Naive thymus-derived CD4-positive, alpha-beta T cell (primary cell): ENCODE measurements at regions of chr1 and their contacts with region 1.

Region 1: GRCh38 chr1:27603681-27604578 is at the start of gene AHDC1:
- DNase-seq: peak; percentile 85 to 93 (median 90)
- ATAC-seq: peak; percentile 89
- H3K4me3 ChIP-seq: peak within 1 kb of the TSS; percentile 81
- H3K4me3 Mint-ChIP-seq: peak within 1 kb of the TSS; percentile 83 to 98 (median 91)
- H3K27ac ChIP-seq: peak within 1 kb of the TSS; percentile 84
- H3K27ac Mint-ChIP-seq: peak within 1 kb of the TSS; percentile 66 to 98 (median 90)
- H3K4me1 ChIP-seq: peaks cover 11 to 37% of the 10 kb centered on the region in 2 donors
- H3K4me1 Mint-ChIP-seq: peaks cover 40 to 49% (median 42%) of the 10 kb centered on the region in 7 donors
- H3K27me3 ChIP-seq: no peaks in the 10 kb centered on the region
- H3K27me3 Mint-ChIP-seq: no peaks in the 10 kb centered on the region
- total RNA-seq, gene AHDC1: 18.4 to 38.8 (median 21.3) TPM

Region 2: DNA sequence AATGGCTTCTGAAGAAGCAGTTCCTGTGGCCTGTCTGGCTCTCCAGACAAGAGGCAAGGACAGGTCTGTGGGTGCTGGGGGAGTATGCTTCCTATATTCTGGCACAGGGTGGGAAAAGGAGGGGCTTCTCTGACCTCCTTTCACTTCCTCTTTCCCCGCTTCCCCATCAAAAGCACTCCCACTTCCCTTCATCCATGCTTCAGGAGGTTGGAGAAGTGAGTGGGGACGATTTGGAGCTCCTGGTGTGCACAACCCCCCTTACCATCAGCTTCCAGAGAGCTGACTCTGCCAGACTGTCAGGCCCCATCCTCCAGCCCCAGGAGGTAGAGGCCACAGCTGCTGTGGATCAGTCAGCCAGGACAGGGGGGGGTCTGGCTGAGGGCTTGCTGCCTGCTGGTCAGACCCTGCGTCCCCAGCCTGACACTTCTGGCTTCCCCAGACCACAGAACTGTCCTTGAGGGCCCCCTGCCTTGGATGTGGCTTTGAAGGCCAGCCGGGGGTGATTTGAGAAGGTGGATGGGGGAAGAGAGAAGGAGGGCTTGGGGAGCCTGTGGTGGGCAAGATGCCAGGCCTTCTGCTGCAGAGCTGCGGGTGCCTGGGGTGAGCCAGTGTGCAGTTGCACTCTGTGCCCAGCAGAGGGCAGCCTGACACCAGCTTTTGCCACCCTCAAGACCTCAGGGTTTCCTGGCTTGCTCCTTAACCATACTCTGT is 303.4 kb before region 1 on chr1:
- CTCF ChIA-PET with region 1: interaction called, 87 read pairs
- POLR2A ChIA-PET with region 1: interaction called, 3 read pairs
- intact Hi-C with region 1: loop called (anchors 1 to 2 kb)
- DNase-seq: peak; percentile 66 to 84 (median 76)
- ATAC-seq: peak; percentile 95
- H3K4me3 ChIP-seq: no peak overlapping the region
- H3K4me3 Mint-ChIP-seq: no peak overlapping the region
- H3K27ac ChIP-seq: no peak overlapping the region
- H3K27ac Mint-ChIP-seq: no peak overlapping the region
- H3K4me1 ChIP-seq: no peaks in the 10 kb centered on the region
- H3K4me1 Mint-ChIP-seq: peaks cover 0 to 9% (median 3%) of the 10 kb centered on the region in 7 donors
- H3K27me3 ChIP-seq: no peaks in the 10 kb centered on the region
- H3K27me3 Mint-ChIP-seq: no peaks in the 10 kb centered on the region

Region 3: GRCh38 chr1:27392096-27392777 is 211.7 kb before region 1 on chr1 and contains the start of gene GPR3:
- CTCF ChIA-PET with region 1: interaction called, 24 read pairs
- POLR2A ChIA-PET with region 1: interaction called, 5 read pairs
- intact Hi-C with region 1: loop called (anchors 1 kb)
- DNase-seq: peak; percentile 82 to 95 (median 88)
- ATAC-seq: peak; percentile 97
- H3K4me3 ChIP-seq: peak within 1 kb of the TSS; percentile 57
- H3K4me3 Mint-ChIP-seq: peak within 1 kb of the TSS; percentile 76 to 90 (median 83)
- H3K27ac ChIP-seq: peak within 1 kb of the TSS; percentile 64
- H3K27ac Mint-ChIP-seq: peak within 1 kb of the TSS; percentile 54 to 98 (median 84)
- H3K4me1 ChIP-seq: peaks cover 9 to 18% of the 10 kb centered on the region in 2 donors
- H3K4me1 Mint-ChIP-seq: peaks cover 12 to 27% (median 20%) of the 10 kb centered on the region in 7 donors
- H3K27me3 ChIP-seq: no peaks in the 10 kb centered on the region
- H3K27me3 Mint-ChIP-seq: peaks cover 0 to 16% (median 0%) of the 10 kb centered on the region in 5 donors
- total RNA-seq, gene GPR3: 0.24 to 0.93 (median 0.45) TPM in 3 of 5 experiments, not detected in the others

Region 4: DNA sequence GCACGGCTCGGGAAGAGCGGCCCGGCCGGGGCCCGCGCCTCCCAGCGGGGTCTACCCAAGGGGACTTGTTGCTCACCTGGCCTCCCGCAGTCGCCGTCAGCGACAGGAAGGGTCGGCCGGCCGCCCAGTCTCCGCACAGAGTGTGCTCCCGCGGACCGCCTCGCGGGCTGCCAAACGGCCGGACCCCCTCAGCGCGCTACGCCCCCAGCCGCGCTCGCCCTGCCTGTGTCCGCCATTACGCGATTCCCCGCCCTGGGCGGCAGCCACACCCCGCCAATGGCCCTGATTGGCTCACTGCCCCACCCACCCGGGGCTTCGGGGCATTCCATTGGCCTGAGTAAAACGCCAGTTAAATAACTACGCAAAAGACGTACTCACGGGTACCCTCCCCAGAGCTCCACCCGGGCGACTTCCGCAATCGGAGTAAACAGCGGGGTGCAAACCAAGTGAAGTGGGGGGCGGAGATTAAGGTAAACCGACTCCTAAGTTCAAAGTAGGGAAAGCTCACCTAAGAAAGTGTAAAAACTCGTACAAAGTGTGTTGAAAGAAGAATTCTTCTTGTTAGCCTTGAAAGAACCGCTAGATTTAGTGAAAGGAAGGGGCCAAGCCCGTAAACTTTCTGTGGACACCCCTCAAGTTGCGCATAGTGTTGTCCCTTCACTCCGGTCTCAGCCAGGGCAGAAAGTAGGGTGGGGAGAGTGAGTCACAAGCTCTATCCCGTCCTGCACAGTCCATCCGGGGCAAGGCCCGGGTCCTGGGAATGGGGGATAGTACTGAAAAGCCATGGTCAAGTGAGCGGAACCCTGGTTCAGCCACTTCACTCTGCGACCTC is 113.8 kb before region 1 on chr1 and contains the start of gene WASF2:
- CTCF ChIA-PET with region 1: interaction called, 3 read pairs
- POLR2A ChIA-PET with region 1: no interaction called
- intact Hi-C with region 1: loop called (anchors 1 kb)
- DNase-seq: peak; percentile 91 to 99 (median 97)
- ATAC-seq: peak; percentile 98
- H3K4me3 ChIP-seq: peak within 1 kb of the TSS; percentile 100
- H3K4me3 Mint-ChIP-seq: peak within 1 kb of the TSS; percentile 89 to 99 (median 96)
- H3K27ac ChIP-seq: peak within 1 kb of the TSS; percentile 88
- H3K27ac Mint-ChIP-seq: peak within 1 kb of the TSS; percentile 97 to 100 (median 99)
- H3K4me1 ChIP-seq: peaks cover 14 to 19% of the 10 kb centered on the region in 2 donors
- H3K4me1 Mint-ChIP-seq: peaks cover 21 to 46% (median 42%) of the 10 kb centered on the region in 7 donors
- H3K27me3 ChIP-seq: no peaks in the 10 kb centered on the region
- H3K27me3 Mint-ChIP-seq: no peaks in the 10 kb centered on the region
- total RNA-seq, gene WASF2: 136 to 177 (median 145) TPM

Region 5: DNA sequence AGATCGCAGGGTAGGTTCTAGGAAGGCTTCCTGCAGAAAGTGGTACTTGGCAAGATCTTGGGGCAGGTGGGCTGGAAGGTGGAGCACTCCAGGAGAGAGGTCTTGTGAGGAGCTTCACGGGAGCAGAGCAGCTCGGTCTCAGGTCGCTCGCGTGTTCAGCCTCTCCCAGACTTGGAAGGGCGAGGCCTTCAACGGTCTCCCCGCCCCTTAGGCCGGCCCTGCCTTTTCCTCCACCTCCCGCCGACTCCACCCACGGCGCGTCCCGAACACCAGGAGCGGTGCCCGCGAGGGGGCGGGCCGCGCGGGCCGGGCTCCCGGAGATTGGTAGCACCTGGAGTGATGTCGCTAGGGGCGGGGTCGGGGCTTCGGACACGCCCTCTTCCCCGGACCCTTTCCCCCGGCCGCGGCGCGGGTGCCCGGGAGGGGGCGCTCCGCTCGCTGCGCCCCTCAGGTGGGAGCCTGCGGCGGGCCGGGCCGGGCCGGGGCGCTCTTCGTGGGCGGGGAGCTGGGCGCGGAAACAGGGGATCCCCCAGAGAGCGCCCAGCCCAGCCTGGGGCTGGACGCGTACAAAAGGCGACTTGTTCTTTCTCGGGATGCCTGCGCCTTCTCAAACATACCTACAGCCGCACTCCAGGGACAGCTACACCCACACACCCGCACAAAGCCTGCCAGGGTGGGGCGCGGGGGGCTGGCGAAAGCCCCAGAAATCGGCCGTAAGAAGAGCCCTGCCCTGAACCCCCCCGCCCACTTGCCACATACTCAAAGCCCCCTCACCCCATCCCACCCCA is 35.4 kb before region 1 on chr1:
- CTCF ChIA-PET with region 1: interaction called, 20 read pairs
- POLR2A ChIA-PET with region 1: interaction called, 3 read pairs
- intact Hi-C with region 1: loop called (anchors 1 kb)
- DNase-seq: peak; percentile 87 to 96 (median 91)
- ATAC-seq: peak; percentile 96
- H3K4me3 ChIP-seq: peak overlapping the region; percentile 51
- H3K4me3 Mint-ChIP-seq: peak overlapping the region; percentile 55 to 88 (median 78)
- H3K27ac ChIP-seq: peak overlapping the region; percentile 68
- H3K27ac Mint-ChIP-seq: peak overlapping the region; percentile 64 to 93 (median 83)
- H3K4me1 ChIP-seq: peaks cover 7 to 19% of the 10 kb centered on the region in 2 donors
- H3K4me1 Mint-ChIP-seq: peaks cover 15 to 57% (median 51%) of the 10 kb centered on the region in 7 donors
- H3K27me3 ChIP-seq: no peaks in the 10 kb centered on the region
- H3K27me3 Mint-ChIP-seq: no peaks in the 10 kb centered on the region

Region 6: GRCh38 chr1:27671964-27672749 is 68.2 kb after region 1 on chr1 and contains the start of gene IFI6:
- CTCF ChIA-PET with region 1: interaction called, 378 read pairs
- POLR2A ChIA-PET with region 1: interaction called, 338 read pairs
- intact Hi-C with region 1: no loop called
- DNase-seq: peak; percentile 42 to 86 (median 81)
- ATAC-seq: peak; percentile 94
- H3K4me3 ChIP-seq: peak within 1 kb of the TSS; percentile 50
- H3K4me3 Mint-ChIP-seq: peak within 1 kb of the TSS; percentile 89 to 98 (median 94)
- H3K27ac ChIP-seq: peak within 1 kb of the TSS; percentile 87
- H3K27ac Mint-ChIP-seq: peak within 1 kb of the TSS; percentile 90 to 99 (median 94)
- H3K4me1 ChIP-seq: peaks cover 21 to 23% of the 10 kb centered on the region in 2 donors
- H3K4me1 Mint-ChIP-seq: peaks cover 16 to 43% (median 41%) of the 10 kb centered on the region in 7 donors
- H3K27me3 ChIP-seq: no peaks in the 10 kb centered on the region
- H3K27me3 Mint-ChIP-seq: peaks cover 0 to 2% (median 0%) of the 10 kb centered on the region in 5 donors
- total RNA-seq, gene IFI6: 24.7 to 266 (median 33.2) TPM